Posterior vena cava (tissue), 2 donors: ENCODE measurements at regions of chr10 and their contacts with region 1.

Region 1: DNA sequence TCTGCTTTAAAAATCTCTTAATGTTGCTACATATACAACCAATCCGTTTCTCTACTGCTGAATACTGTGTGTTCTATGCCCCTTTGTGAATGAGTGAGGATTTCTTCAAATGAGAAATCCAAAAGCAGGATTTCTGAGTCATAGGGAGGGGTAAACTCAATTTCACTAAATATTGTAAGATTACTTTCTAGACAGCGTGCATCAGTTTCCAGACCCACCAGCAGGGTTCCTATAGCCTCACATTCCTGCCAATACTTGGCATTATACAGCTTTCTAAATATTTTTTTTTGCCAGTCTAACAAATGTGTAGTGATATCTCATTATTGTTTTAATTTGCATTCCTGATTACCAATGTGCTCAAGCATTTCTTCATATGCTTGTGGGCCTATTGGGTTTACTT is 35.5 kb downstream of the GPR158 start:
- DNase-seq: no peak

Region 2: GRCh38 chr10:25561758-25562157 is 351.5 kb after region 1 on chr10:
- intact Hi-C with region 1: loop called in 1 of 2 experiments (anchors 10 kb)
- DNase-seq: no peak